Activated naive CD4-positive, alpha-beta T cell treated with anti-CD3 and anti-CD28 coated beads for 36 hours (primary cell): ENCODE measurements at regions of chr4 and their contacts with region 1.

Region 1: GRCh38 chr4:24209891-24210290 is 320.0 kb upstream of the PPARGC1A start:
- DNase-seq: no peak
- H3K4me3 Mint-ChIP-seq: no peak overlapping the region
- H3K27ac Mint-ChIP-seq: no peak overlapping the region
- H3K4me1 Mint-ChIP-seq: no peaks in the 10 kb centered on the region
- H3K27me3 Mint-ChIP-seq: peaks cover 2% of the 10 kb centered on the region

Region 2: GRCh38 chr4:24195976-24196736 is 13.7 kb before region 1 on chr4:
- CTCF ChIA-PET with region 1: no interaction called
- intact Hi-C with region 1: no loop called
- DNase-seq: no peak
- H3K4me3 Mint-ChIP-seq: no peak overlapping the region
- H3K27ac Mint-ChIP-seq: no peak overlapping the region
- H3K4me1 Mint-ChIP-seq: no peaks in the 10 kb centered on the region
- H3K27me3 Mint-ChIP-seq: no peaks in the 10 kb centered on the region

Region 3: DNA sequence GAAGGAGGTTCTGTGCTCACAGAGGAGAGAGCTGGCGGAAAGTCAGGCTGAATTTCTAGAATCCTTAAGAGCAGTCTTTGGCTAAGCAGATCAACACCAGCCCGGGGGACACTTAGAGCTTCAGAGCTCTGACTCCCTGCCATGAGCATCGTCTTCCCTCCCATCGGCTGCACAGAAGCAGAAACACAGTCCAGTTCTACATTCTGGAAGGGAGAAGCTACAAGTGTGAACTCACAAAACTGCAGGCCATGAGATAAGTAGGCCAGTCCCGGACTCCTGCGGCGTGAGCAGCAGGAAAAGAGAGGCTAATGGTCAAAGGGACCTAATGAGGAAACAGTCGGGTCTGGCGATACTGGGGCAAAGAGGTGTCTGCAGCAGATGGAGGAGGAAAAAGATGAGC is 163.0 kb after region 1 on chr4:
- CTCF ChIA-PET with region 1: no interaction called
- intact Hi-C with region 1: no loop called
- DNase-seq: no peak
- H3K4me3 Mint-ChIP-seq: no peak overlapping the region
- H3K27ac Mint-ChIP-seq: no peak overlapping the region
- H3K4me1 Mint-ChIP-seq: peaks cover 3% of the 10 kb centered on the region
- H3K27me3 Mint-ChIP-seq: peaks cover 30% of the 10 kb centered on the region

Region 4: DNA sequence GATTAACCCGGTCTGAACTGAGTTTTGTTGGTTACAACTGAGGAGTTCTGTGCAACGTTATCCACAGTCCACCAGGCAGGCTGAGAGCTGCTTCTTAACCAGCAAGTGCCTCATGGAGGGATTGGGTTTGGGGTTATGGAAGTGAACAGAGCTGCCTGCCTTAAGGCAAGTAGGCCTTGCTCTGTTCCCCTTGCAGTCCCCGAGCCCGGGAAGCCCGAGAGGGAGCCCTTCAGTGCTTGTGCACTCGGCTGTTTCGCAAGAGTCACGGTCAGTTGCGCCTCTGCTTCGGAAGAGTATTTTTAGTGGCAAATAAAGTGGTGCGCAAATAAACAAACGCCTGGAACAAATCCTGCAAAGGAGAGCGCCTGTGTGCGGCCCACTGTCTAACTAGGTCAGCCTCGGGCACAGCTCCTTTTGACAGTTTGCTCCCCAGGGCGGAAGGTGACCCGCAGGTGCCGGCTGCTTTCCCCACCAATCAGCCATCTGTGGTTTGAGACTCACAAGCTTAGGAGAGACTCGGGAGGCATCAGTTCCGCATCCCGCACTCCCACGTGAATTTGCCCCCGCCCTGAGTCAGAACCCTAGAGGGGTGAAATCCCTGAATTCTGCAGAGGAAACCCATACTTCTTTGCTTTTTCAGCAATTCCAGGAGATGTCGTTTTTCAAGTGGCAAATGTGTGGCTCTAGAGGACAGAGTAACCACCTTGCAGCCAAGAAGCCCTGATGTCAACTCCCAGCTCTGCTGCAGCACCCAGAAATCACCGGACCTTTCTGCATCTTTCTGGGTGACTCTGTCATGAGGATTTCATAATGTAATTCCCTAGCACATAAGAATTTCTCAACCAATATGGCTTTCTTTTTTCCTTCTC is 764.1 kb after region 1 on chr4:
- CTCF ChIA-PET with region 1: no interaction called
- intact Hi-C with region 1: loop called (anchors 5 kb)
- DNase-seq: no peak
- H3K4me3 Mint-ChIP-seq: no peak overlapping the region
- H3K27ac Mint-ChIP-seq: no peak overlapping the region
- H3K4me1 Mint-ChIP-seq: no peaks in the 10 kb centered on the region
- H3K27me3 Mint-ChIP-seq: peaks cover 30% of the 10 kb centered on the region